Calu3 (cell line): ENCODE measurements at regions of chr7 and their contacts with region 1.

Region 1: GRCh38 chr7:81499262-81500116 is 270.4 kb downstream of the HGF start:
- DNase-seq: peak; percentile 31
- H3K4me3 Mint-ChIP-seq: no peak overlapping the region
- H3K27ac Mint-ChIP-seq: peak overlapping the region; percentile 19
- H3K4me1 Mint-ChIP-seq: peaks cover 21% of the 10 kb centered on the region
- H3K27me3 Mint-ChIP-seq: no peaks in the 10 kb centered on the region
- CTCF ChIP-seq: no peak

Region 2: GRCh38 chr7:81402227-81402626 is 97.3 kb before region 1 on chr7:
- CTCF ChIA-PET with region 1: no interaction called
- intact Hi-C with region 1: no loop called
- DNase-seq: no peak
- H3K4me3 Mint-ChIP-seq: no peak overlapping the region
- H3K27ac Mint-ChIP-seq: no peak overlapping the region
- H3K4me1 Mint-ChIP-seq: no peaks in the 10 kb centered on the region
- H3K27me3 Mint-ChIP-seq: no peaks in the 10 kb centered on the region
- CTCF ChIP-seq: no peak

Region 3: DNA sequence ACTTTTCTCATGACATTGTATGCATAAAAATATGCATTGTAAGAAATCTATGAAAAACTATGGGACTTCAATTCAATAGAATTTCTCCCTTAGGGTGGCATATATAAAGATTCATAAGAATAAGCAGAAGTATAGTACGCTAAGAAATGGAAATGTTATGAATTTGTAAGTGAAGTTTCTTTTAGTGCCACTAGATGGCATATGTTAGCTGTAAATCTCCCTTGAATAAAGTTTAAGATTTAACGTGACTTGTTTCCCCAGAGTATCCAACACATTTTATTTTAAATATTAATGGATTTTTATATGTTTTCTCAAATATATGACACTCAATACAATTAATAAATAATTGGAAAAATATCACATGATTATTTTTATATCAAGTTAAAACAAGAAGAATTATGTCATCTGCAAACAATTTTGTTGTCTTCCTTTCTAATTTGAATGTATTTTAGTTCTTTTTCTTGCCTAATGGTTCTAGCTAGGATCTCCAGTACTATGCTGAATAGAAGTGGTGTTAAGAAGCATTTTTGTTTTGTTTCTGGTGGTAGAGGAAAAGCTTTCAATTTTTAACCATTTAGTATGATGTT is 16.8 kb before region 1 on chr7:
- CTCF ChIA-PET with region 1: no interaction called
- intact Hi-C with region 1: no loop called
- DNase-seq: no peak
- H3K4me3 Mint-ChIP-seq: no peak overlapping the region
- H3K27ac Mint-ChIP-seq: no peak overlapping the region
- H3K4me1 Mint-ChIP-seq: no peaks in the 10 kb centered on the region
- H3K27me3 Mint-ChIP-seq: no peaks in the 10 kb centered on the region
- CTCF ChIP-seq: no peak

Region 4: DNA sequence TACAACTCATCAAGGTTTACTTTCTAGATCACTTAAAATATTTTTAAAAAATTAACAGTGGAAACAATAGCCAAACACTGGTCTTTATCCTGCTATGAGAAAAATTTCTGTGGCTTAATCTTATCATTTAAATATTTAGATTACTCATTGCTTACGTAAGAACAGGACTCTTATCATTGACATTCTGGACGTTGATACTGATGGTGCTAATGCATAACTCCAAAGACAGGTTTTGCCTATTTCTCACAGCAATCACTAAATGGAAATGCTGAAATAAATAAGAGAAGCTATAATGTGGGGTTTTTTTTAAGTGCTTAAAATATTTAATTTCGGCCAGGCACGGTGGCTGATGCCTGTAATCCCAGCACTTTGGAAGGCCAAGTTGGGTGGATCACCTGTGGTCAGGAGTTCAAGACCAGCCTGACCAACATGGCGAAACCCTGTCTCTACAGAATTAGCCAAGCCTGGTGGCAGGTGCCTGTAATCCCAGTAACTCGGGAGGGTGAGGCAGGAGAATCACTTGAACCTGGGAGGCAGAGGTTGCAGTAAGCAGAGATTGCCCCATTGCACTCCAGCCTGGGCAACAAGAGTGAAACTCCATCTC is 75.3 kb after region 1 on chr7:
- CTCF ChIA-PET with region 1: no interaction called
- intact Hi-C with region 1: no loop called
- DNase-seq: no peak
- H3K4me3 Mint-ChIP-seq: no peak overlapping the region
- H3K27ac Mint-ChIP-seq: no peak overlapping the region
- H3K4me1 Mint-ChIP-seq: no peaks in the 10 kb centered on the region
- H3K27me3 Mint-ChIP-seq: no peaks in the 10 kb centered on the region
- CTCF ChIP-seq: no peak

Region 5: GRCh38 chr7:81627536-81628287 is 128.2 kb after region 1 on chr7:
- CTCF ChIA-PET with region 1: no interaction called
- intact Hi-C with region 1: loop called (anchors 10 kb)
- DNase-seq: no peak
- H3K4me3 Mint-ChIP-seq: no peak overlapping the region
- H3K27ac Mint-ChIP-seq: no peak overlapping the region
- H3K4me1 Mint-ChIP-seq: peaks cover 20% of the 10 kb centered on the region
- H3K27me3 Mint-ChIP-seq: no peaks in the 10 kb centered on the region
- CTCF ChIP-seq: no peak

Region 6: GRCh38 chr7:81715984-81716588 is 216.6 kb after region 1 on chr7:
- CTCF ChIA-PET with region 1: interaction called, 4 read pairs
- intact Hi-C with region 1: loop called (anchors 1 kb)
- DNase-seq: peak; percentile 18
- H3K4me3 Mint-ChIP-seq: no peak overlapping the region
- H3K27ac Mint-ChIP-seq: no peak overlapping the region
- H3K4me1 Mint-ChIP-seq: no peaks in the 10 kb centered on the region
- H3K27me3 Mint-ChIP-seq: no peaks in the 10 kb centered on the region
- CTCF ChIP-seq: peak; percentile 41

Region 7: GRCh38 chr7:81956520-81956919 is 457.0 kb after region 1 on chr7:
- CTCF ChIA-PET with region 1: no interaction called
- intact Hi-C with region 1: loop called (anchors 2 kb)
- DNase-seq: peak; percentile 9
- H3K4me3 Mint-ChIP-seq: no peak overlapping the region
- H3K27ac Mint-ChIP-seq: no peak overlapping the region
- H3K4me1 Mint-ChIP-seq: no peaks in the 10 kb centered on the region
- H3K27me3 Mint-ChIP-seq: no peaks in the 10 kb centered on the region
- CTCF ChIP-seq: no peak

Region 8: DNA sequence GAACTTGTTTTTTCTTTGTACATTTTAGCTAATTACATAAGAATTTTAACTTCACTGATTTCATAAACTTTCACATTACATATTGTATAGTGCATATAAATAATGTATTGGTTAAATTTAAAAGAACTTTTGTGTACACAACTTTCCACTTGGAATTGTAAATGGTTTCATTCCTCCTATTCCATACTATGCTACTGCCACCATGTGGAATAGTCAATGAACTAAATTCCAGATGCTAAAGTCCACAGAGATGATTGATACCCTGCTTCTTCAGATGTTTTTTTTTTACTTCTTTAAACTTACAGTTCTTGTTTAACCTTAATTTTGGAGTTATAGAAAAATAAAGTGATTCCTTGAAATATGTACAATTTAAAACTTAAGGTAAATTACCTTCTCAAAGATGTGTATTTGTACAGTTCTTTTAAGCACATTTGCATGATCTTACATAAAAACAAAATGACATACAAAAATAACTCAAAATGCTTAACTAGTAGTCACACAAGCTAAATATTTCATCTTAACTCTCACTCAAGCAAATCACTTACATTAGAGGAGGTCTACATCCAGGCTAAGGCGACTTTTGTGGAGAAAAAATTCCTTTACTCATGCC is 518.0 kb after region 1 on chr7:
- CTCF ChIA-PET with region 1: no interaction called
- intact Hi-C with region 1: loop called (anchors 1 kb)
- DNase-seq: no peak
- H3K4me3 Mint-ChIP-seq: no peak overlapping the region
- H3K27ac Mint-ChIP-seq: no peak overlapping the region
- H3K4me1 Mint-ChIP-seq: peaks cover 8% of the 10 kb centered on the region
- H3K27me3 Mint-ChIP-seq: no peaks in the 10 kb centered on the region
- CTCF ChIP-seq: no peak

Region 9: GRCh38 chr7:82729172-82730030 is 1229.9 kb after region 1 on chr7:
- CTCF ChIA-PET with region 1: no interaction called
- intact Hi-C with region 1: loop called (anchors 5 kb)
- DNase-seq: peak; percentile 35
- H3K4me3 Mint-ChIP-seq: no peak overlapping the region
- H3K27ac Mint-ChIP-seq: no peak overlapping the region
- H3K4me1 Mint-ChIP-seq: no peaks in the 10 kb centered on the region
- H3K27me3 Mint-ChIP-seq: no peaks in the 10 kb centered on the region
- CTCF ChIP-seq: peak; percentile 33